B cell (primary cell): ENCODE measurements at regions of chr13 and their contacts with region 1.

Region 1: GRCh38 chr13:28805193-28805819 is 14.8 kb upstream of the MTUS2 start:
- DNase-seq: peak; percentile 6
- ATAC-seq: no peak
- H3K4me3 ChIP-seq: no peak overlapping the region
- H3K4me3 Mint-ChIP-seq: no peak overlapping the region
- H3K27ac ChIP-seq: no peak overlapping the region
- H3K27ac Mint-ChIP-seq: no peak overlapping the region
- H3K4me1 ChIP-seq: no peaks in the 10 kb centered on the region
- H3K4me1 Mint-ChIP-seq: no peaks in the 10 kb centered on the region
- H3K27me3 ChIP-seq: peaks cover 0 to 12% (median 5%) of the 10 kb centered on the region in 4 experiments
- H3K27me3 Mint-ChIP-seq: peaks cover 34% of the 10 kb centered on the region
- CTCF ChIP-seq: peak; percentile 19

Region 2: DNA sequence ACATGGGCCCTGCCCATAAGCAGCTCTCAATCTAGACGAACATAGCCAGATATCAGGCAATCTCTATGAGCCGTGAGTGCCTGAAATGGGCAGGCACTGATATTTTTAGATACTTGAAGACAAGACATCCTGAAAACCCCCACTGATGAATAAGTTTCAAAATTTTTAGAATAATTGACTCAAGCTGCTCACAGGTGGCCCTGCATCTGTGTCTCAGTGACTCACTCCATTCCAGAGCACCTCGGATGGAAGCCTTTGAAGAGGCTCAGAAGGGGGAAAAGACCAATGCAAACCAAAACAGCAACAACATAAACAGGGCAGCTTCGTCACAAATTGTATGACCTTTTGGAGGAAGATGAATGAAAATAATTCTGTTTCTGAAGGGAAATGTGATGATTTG is 43.7 kb before region 1 on chr13:
- CTCF ChIA-PET with region 1: no interaction called
- POLR2A ChIA-PET with region 1: no interaction called
- intact Hi-C with region 1: no loop called
- DNase-seq: no peak
- ATAC-seq: no peak
- H3K4me3 ChIP-seq: no peak overlapping the region
- H3K4me3 Mint-ChIP-seq: no peak overlapping the region
- H3K27ac ChIP-seq: no peak overlapping the region
- H3K27ac Mint-ChIP-seq: no peak overlapping the region
- H3K4me1 ChIP-seq: no peaks in the 10 kb centered on the region
- H3K4me1 Mint-ChIP-seq: no peaks in the 10 kb centered on the region
- H3K27me3 ChIP-seq: no peaks in the 10 kb centered on the region
- H3K27me3 Mint-ChIP-seq: peaks cover 25% of the 10 kb centered on the region
- CTCF ChIP-seq: no peak

Region 3: GRCh38 chr13:29369060-29369743 is 563.9 kb after region 1 on chr13:
- CTCF ChIA-PET with region 1: no interaction called
- POLR2A ChIA-PET with region 1: interaction called, 10 read pairs
- intact Hi-C with region 1: no loop called
- DNase-seq: peak; percentile 76
- ATAC-seq: peak; percentile 70
- H3K4me3 ChIP-seq: no peak overlapping the region
- H3K4me3 Mint-ChIP-seq: no peak overlapping the region
- H3K27ac ChIP-seq: no peak overlapping the region
- H3K27ac Mint-ChIP-seq: no peak overlapping the region
- H3K4me1 ChIP-seq: peaks cover 6% of the 10 kb centered on the region in 2 donors
- H3K4me1 Mint-ChIP-seq: peaks cover 8% of the 10 kb centered on the region
- H3K27me3 ChIP-seq: peaks cover 0 to 6% (median 0%) of the 10 kb centered on the region in 4 experiments
- H3K27me3 Mint-ChIP-seq: peaks cover 10% of the 10 kb centered on the region
- CTCF ChIP-seq: peak; percentile 53